ENCODE measurements at regions of chr11 and their contacts with region 1.

Region 1: GRCh38 chr11:36354221-36355003 is 58.3 kb downstream of the PRR5L start:
- DNase-seq: no peak
- H3K4me3 Mint-ChIP-seq: peak overlapping the region; percentile 31
- H3K27ac Mint-ChIP-seq: peak overlapping the region; percentile 72
- H3K4me1 Mint-ChIP-seq: peaks cover 80% of the 10 kb centered on the region
- H3K27me3 Mint-ChIP-seq: peaks cover 7% of the 10 kb centered on the region

Region 2: GRCh38 chr11:36411202-36411640 is 56.8 kb after region 1 on chr11:
- CTCF ChIA-PET with region 1: interaction called, 4 read pairs
- POLR2A ChIA-PET with region 1: no interaction called
- intact Hi-C with region 1: loop called (anchors 1 kb)
- DNase-seq: peak; percentile 40
- H3K4me3 Mint-ChIP-seq: peak overlapping the region; percentile 10
- H3K27ac Mint-ChIP-seq: peak overlapping the region; percentile 95
- H3K4me1 Mint-ChIP-seq: peaks cover 67% of the 10 kb centered on the region
- H3K27me3 Mint-ChIP-seq: no peaks in the 10 kb centered on the region

Region 3: GRCh38 chr11:36421546-36422155 is 67.2 kb after region 1 on chr11:
- CTCF ChIA-PET with region 1: no interaction called
- POLR2A ChIA-PET with region 1: interaction called, 3 read pairs
- intact Hi-C with region 1: loop called (anchors 1 kb)
- DNase-seq: no peak
- H3K4me3 Mint-ChIP-seq: peak overlapping the region; percentile 31
- H3K27ac Mint-ChIP-seq: peak overlapping the region; percentile 85
- H3K4me1 Mint-ChIP-seq: peaks cover 79% of the 10 kb centered on the region
- H3K27me3 Mint-ChIP-seq: no peaks in the 10 kb centered on the region

Region 4: DNA sequence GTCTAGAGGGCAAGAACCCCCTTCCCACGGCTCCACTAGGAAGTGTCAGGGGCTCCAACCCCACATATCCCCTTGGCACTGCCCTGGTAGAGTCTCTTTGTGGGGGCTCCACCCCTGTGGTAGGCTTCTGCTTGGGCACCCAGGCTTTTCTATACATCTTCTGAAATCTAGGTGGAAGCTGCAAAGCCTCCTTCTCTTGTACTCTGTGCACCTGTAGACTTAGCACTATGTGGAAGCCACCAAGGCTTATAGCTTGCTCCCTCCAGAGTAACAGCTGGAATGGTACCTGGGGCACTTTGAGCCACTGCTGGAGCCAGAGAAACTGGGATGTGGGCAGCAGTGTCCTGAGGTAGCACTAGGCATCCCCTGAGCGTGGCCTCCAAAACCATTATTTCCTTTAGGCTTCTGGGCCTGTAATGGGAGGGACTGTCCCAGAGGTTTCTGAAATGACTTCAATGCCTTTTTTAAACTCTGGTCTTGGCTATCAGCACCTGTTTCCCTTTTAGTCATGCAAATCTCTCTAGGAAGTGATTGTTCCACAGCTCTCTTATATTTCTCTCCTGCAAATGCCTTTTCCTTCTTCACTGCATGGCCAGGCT is 87.3 kb after region 1 on chr11:
- CTCF ChIA-PET with region 1: no interaction called
- POLR2A ChIA-PET with region 1: no interaction called
- intact Hi-C with region 1: loop called (anchors 1 kb)
- DNase-seq: peak; percentile 55
- H3K4me3 Mint-ChIP-seq: no peak overlapping the region
- H3K27ac Mint-ChIP-seq: peak overlapping the region; percentile 34
- H3K4me1 Mint-ChIP-seq: peaks cover 19% of the 10 kb centered on the region
- H3K27me3 Mint-ChIP-seq: no peaks in the 10 kb centered on the region

Region 5: DNA sequence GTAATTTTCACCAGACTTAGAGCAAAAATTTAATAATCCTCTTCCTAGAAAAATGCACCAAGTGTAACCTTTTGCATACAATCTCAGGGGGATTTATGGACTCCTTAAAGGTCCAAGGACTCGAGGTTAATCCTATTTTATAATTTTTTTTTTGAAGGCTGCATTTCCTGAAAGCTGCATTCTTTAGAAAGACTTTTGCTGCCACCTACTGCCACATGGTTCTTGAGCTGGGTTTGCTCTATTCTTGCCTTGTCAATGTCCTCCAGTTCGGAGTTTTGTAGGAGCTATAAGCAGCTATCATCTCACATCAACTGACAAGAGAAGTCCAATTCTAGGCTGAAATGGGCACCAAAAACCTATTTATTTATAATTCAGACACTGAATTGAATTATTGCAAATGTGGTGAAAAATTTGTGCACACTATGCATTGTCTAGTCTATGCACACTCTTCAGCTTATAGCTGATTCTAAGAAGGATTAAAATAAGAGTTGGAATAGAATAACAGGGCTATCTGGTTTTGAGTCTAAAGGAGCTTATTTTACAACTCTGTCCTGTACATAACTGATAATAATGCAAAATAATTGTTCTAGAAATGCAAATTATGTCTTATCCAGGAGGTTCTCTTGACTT is 124.4 kb after region 1 on chr11:
- CTCF ChIA-PET with region 1: interaction called, 18 read pairs
- POLR2A ChIA-PET with region 1: no interaction called
- intact Hi-C with region 1: loop called (anchors 2 kb)
- DNase-seq: peak; percentile 38
- H3K4me3 Mint-ChIP-seq: no peak overlapping the region
- H3K27ac Mint-ChIP-seq: no peak overlapping the region
- H3K4me1 Mint-ChIP-seq: peaks cover 12% of the 10 kb centered on the region
- H3K27me3 Mint-ChIP-seq: no peaks in the 10 kb centered on the region

Region 6: GRCh38 chr11:36509694-36510566 is 155.5 kb after region 1 on chr11 and contains the start of gene TRAF6:
- CTCF ChIA-PET with region 1: interaction called, 3 read pairs
- POLR2A ChIA-PET with region 1: no interaction called
- intact Hi-C with region 1: loop called (anchors 2 kb)
- DNase-seq: peak; percentile 92
- H3K4me3 Mint-ChIP-seq: peak within 1 kb of the TSS; percentile 94
- H3K27ac Mint-ChIP-seq: peak within 1 kb of the TSS; percentile 86
- H3K4me1 Mint-ChIP-seq: peaks cover 27% of the 10 kb centered on the region
- H3K27me3 Mint-ChIP-seq: peaks cover 5% of the 10 kb centered on the region
- total RNA-seq, gene TRAF6: 12.0 to 12.1 TPM

Measured in activated CD4-positive, alpha-beta memory T cell treated with anti-CD3 and anti-CD28 coated beads for 36 hours (primary cell).